ENCODE measurements at regions of chr16 and their contacts with region 1.

Region 1: GRCh38 chr16:31458844-31459721 is at the start of gene ARMC5:
- DNase-seq: peak; percentile 97
- H3K4me3 Mint-ChIP-seq: peak within 1 kb of the TSS; percentile 88
- H3K27ac Mint-ChIP-seq: peak within 1 kb of the TSS; percentile 97
- H3K4me1 Mint-ChIP-seq: peaks cover 14% of the 10 kb centered on the region
- H3K27me3 Mint-ChIP-seq: no peaks in the 10 kb centered on the region
- CTCF ChIP-seq: peak; percentile 38
- total RNA-seq, gene ARMC5: 8.1 and 10.1 TPM in 2 replicates

Region 2: GRCh38 chr16:31073968-31074813 is 384.9 kb before region 1 on chr16 and contains the starts of genes ZNF646 and ZNF668:
- CTCF ChIA-PET with region 1: interaction called, 4 read pairs
- POLR2A ChIA-PET with region 1: interaction called, 18 read pairs
- intact Hi-C with region 1: no loop called
- DNase-seq: peak; percentile 98
- H3K4me3 Mint-ChIP-seq: peak within 1 kb of the TSS; percentile 97
- H3K27ac Mint-ChIP-seq: peak within 1 kb of the TSS; percentile 97
- H3K4me1 Mint-ChIP-seq: peaks cover 24% of the 10 kb centered on the region
- H3K27me3 Mint-ChIP-seq: no peaks in the 10 kb centered on the region
- CTCF ChIP-seq: no peak
- total RNA-seq, gene ZNF646: 12.6 and 15.2 TPM in 2 replicates
- total RNA-seq, gene ZNF668: 11.9 and 15.1 TPM in 2 replicates

Region 3: DNA sequence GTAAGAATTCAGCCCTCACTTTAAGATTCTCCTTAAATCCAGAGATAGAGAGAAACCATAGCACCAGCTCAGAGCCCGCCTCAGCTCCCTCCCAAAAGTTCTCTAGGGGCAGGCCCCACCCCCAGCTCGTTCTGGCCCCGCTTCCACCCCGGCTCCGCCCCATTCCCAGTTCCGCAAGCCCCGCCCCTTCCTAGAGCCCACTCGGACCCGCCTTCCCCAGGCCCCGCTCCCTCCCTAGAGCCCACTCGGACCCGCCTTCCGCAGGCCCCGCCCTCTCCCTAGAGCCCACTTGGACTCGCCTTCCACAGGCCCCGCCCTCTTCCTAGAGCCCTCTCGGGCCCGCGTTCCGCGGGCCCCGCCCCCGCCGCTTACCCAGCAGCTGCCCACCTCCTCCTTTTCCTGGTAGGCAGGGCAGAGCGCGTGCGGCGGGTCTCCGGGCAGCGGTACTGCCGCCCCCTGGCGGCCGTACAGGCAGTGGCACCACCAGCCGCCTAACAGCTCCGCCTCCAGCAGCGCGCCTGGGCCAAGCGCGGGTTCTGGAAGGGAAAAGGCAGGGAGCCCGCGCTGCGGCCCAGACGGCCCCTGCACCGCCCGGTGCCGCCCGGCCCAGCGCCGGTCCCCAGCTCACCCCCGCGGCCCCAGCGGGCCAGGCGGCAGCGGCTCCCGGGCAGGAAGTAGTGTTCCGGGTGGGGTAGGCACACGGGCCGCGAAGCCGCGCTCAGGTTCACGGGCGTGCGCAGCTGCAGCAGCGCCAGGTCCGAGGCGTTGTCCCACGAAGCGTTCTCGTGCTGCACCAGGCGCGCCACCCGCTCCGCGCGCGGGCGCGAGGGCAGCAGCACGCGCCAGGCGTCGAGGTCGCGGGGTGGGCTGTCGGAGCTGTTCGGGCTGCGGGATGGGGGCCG is 316.7 kb before region 1 on chr16:
- CTCF ChIA-PET with region 1: interaction called, 4 read pairs
- POLR2A ChIA-PET with region 1: interaction called, 22 read pairs
- intact Hi-C with region 1: no loop called
- DNase-seq: peak; percentile 99
- H3K4me3 Mint-ChIP-seq: peak overlapping the region; percentile 71
- H3K27ac Mint-ChIP-seq: peak overlapping the region; percentile 91
- H3K4me1 Mint-ChIP-seq: peaks cover 21% of the 10 kb centered on the region
- H3K27me3 Mint-ChIP-seq: no peaks in the 10 kb centered on the region
- CTCF ChIP-seq: peak; percentile 90

Region 4: GRCh38 chr16:31440516-31441184 is 18.4 kb before region 1 on chr16:
- CTCF ChIA-PET with region 1: interaction called, 65 read pairs
- POLR2A ChIA-PET with region 1: interaction called, 30 read pairs
- intact Hi-C with region 1: no loop called
- DNase-seq: no peak
- H3K4me3 Mint-ChIP-seq: no peak overlapping the region
- H3K27ac Mint-ChIP-seq: no peak overlapping the region
- H3K4me1 Mint-ChIP-seq: peaks cover 12% of the 10 kb centered on the region
- H3K27me3 Mint-ChIP-seq: no peaks in the 10 kb centered on the region
- CTCF ChIP-seq: no peak

Region 5: GRCh38 chr16:31487720-31488467 is 28.8 kb after region 1 on chr16:
- CTCF ChIA-PET with region 1: interaction called, 19 read pairs
- POLR2A ChIA-PET with region 1: interaction called, 4 read pairs
- intact Hi-C with region 1: no loop called
- DNase-seq: peak; percentile 17
- H3K4me3 Mint-ChIP-seq: peak overlapping the region; percentile 71
- H3K27ac Mint-ChIP-seq: no peak overlapping the region
- H3K4me1 Mint-ChIP-seq: no peaks in the 10 kb centered on the region
- H3K27me3 Mint-ChIP-seq: no peaks in the 10 kb centered on the region
- CTCF ChIP-seq: no peak

Region 6: DNA sequence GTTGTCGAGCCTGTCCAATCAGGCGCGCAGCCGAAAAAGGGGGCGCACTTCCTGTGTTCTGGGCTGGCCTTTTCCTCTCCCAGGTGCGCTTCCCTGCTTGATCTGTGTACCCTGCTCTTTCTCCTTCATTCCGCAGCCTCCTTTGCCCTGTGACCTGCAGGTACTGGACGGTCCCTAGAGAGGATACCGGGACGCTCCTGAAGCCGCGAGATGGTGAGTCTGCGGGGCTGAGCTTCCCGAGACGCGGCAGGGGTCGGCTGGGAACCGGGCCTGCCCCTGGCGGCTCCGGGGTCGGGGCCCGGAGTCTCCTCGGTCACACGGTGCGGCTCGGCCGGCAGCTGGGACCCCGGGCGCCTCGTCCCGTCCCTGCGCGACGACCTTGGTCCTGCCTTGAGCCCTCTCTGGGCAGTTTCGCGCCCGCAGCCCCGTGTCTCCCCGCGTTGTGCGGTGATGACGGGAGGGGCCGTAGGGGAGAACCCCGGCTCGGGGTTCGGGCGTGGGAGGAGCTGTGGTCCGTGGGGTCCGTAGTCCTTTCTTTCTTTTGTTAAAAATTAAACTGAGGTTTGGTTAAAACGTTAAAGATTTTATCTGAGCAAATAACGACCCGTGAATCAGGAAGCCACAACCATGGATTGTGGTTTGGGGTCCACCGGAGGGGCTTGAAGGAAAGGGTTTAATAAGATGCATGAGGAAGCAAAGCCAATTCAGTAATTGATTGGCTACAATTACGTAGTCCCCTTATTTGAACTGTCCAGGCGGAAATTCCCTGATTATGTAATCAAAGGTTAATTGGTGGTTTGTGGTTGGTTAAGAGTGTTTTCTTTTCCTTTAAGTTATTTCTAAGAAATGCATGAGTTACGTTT is 241.7 kb after region 1 on chr16:
- CTCF ChIA-PET with region 1: interaction called, 50 read pairs
- POLR2A ChIA-PET with region 1: interaction called, 5 read pairs
- intact Hi-C with region 1: loop called (anchors 10 kb)
- DNase-seq: peak; percentile 89
- H3K4me3 Mint-ChIP-seq: peak overlapping the region; percentile 87
- H3K27ac Mint-ChIP-seq: peak overlapping the region; percentile 90
- H3K4me1 Mint-ChIP-seq: peaks cover 11% of the 10 kb centered on the region
- H3K27me3 Mint-ChIP-seq: no peaks in the 10 kb centered on the region
- CTCF ChIP-seq: no peak

Region 7: GRCh38 chr16:31868691-31869167 is 409.6 kb after region 1 on chr16:
- CTCF ChIA-PET with region 1: interaction called, 8 read pairs
- POLR2A ChIA-PET with region 1: interaction called, 13 read pairs
- intact Hi-C with region 1: loop called (anchors 2 kb)
- DNase-seq: peak; percentile 81
- H3K4me3 Mint-ChIP-seq: no peak overlapping the region
- H3K27ac Mint-ChIP-seq: no peak overlapping the region
- H3K4me1 Mint-ChIP-seq: peaks cover 8% of the 10 kb centered on the region
- H3K27me3 Mint-ChIP-seq: peaks cover 6% of the 10 kb centered on the region
- CTCF ChIP-seq: peak; percentile 65

Measured in MCF 10A (cell line).